ENCODE measurements at regions of chr1 and their contacts with region 1.

Region 1: DNA sequence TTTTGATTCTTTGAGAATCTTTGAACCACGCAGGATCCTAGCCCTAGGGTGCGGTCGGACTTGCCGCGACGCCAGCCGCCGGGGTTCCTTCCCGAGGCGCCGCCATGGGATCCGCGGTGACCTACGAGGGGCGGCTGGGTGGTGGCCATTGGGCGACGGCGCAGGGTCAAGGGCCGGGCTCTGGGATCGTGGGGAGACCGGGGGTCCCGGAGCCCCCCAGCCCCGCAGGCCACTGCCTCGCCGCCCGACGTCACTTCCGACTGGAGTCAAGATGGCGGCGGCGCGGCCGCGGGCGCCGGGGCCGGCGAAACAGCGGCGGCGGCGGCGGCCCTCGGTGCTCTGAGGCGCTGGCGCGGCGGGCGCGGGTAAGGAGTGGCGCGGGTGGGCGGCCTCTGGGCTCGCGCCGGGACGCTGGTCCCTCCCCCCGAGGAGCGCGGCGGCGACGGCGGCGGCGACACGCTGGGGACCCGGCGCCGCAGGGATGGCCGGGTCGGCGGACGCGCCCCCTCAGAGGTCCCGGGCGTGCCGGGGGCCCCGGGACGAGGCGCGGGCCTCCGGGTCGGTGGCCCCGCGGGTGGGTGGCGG is at the start of gene PRDM2:
- DNase-seq: peak; percentile 53
- H3K4me3 Mint-ChIP-seq: peak within 1 kb of the TSS; percentile 94
- H3K27ac Mint-ChIP-seq: peak within 1 kb of the TSS; percentile 96
- H3K4me1 Mint-ChIP-seq: peaks cover 38% of the 10 kb centered on the region
- H3K27me3 Mint-ChIP-seq: peaks cover 8% of the 10 kb centered on the region
- total RNA-seq, gene PRDM2: 45.0 and 47.3 TPM in 2 replicates

Region 2: GRCh38 chr1:13730751-13731482 is 30.9 kb after region 1 on chr1:
- intact Hi-C with region 1: loop called (anchors 1 kb)
- DNase-seq: peak; percentile 82
- H3K4me3 Mint-ChIP-seq: peak overlapping the region; percentile 79
- H3K27ac Mint-ChIP-seq: peak overlapping the region; percentile 99
- H3K4me1 Mint-ChIP-seq: peaks cover 52% of the 10 kb centered on the region
- H3K27me3 Mint-ChIP-seq: no peaks in the 10 kb centered on the region